ENCODE measurements at regions of chr1 and their contacts with region 1.

Region 1: DNA sequence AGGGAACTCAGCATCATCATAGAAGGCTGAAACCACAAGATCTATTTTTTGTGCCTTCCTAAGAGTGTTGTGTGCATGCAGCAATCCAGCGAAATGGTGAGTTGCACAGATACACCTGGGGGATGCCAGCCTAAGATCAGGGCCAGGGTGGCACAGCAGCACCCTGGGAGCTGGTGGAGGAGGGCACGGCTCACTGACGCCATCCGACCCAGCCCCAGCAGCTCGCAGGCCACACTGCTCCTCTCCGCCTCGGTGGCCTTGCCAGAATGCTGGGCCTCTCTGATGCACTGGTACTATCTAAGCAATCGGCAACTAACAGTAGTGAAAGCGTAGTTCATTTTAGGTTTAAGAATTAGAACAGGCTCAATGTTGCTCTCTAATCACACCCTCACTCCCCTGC is 37.8 kb downstream of the CAPZB start:
- DNase-seq: no peak
- H3K27ac ChIP-seq: peak overlapping the region; percentile 82
- CTCF ChIP-seq: no peak

Region 2: DNA sequence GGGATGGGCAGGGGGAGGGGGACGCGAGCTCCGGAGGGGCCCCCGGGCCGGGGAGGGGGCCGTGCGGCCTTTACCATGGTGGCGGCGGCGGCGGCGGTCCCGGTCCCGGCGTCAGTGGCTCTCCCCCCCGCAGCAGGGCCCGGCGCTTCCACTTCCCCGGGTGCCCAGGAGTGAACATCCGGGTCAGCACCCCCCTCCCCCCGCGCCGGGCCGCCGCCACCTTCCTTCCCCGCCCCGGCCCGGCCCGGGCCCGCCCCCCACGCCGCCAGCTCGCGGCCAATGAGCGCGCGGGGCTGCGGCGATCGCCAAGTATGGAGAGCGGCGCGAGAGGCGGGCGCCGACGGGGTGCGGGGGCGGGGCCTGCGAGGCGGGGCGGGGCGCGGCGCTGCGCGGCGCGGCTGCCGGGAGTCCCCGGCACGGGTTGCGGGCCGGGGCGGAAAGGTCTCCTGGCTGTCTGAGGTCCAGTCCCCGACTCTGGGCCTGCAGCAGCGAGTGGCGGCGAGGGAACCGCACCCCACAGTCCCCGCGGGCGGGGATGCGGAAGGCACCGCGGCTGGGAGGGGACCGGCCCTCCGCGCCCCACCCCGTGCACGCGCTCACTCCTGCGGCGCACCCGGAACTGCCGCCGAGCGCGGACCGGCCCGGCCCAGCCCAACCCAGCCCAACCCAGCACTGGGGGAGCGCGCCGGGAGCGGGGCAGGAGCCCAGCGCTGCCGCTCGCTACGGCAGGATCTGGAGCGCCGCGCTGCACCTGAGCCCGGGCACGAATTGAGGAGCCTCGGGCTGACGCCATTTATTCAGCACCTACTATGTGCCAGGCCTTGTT is 38.0 kb after region 1 on chr1 and contains the start of gene CAPZB:
- CTCF ChIA-PET with region 1: interaction called, 3 read pairs
- POLR2A ChIA-PET with region 1: interaction called, 10 read pairs
- DNase-seq: peak; percentile 96
- H3K27ac ChIP-seq: peak within 1 kb of the TSS; percentile 95
- CTCF ChIP-seq: no peak